CD4-positive, alpha-beta T cell (primary cell): ENCODE measurements at regions of chr19 and their contacts with region 1.

Region 1: GRCh38 chr19:58558623-58559274 is 338 bp upstream of the UBE2M start:
- DNase-seq: peak; percentile 99 to 100 (median 100)
- ATAC-seq: peak; percentile 70
- H3K4me3 ChIP-seq: peak overlapping the region; percentile 76
- H3K4me3 Mint-ChIP-seq: peak overlapping the region; percentile 98
- H3K27ac ChIP-seq: peak overlapping the region; percentile 88 to 96
- H3K27ac Mint-ChIP-seq: peak overlapping the region; percentile 96
- H3K4me1 ChIP-seq: peaks cover 90% of the 10 kb centered on the region
- H3K4me1 Mint-ChIP-seq: peaks cover 82% of the 10 kb centered on the region
- H3K27me3 ChIP-seq: no peaks in the 10 kb centered on the region
- H3K27me3 Mint-ChIP-seq: no peaks in the 10 kb centered on the region
- CTCF ChIP-seq: no peak

Region 2: GRCh38 chr19:58543826-58544590 is 14.7 kb before region 1 on chr19 and contains the start of gene TRIM28:
- CTCF ChIA-PET with region 1: no interaction called
- POLR2A ChIA-PET with region 1: interaction called, 64 read pairs
- intact Hi-C with region 1: loop called (anchors 1 kb)
- DNase-seq: peak; percentile 99 to 100 (median 100)
- ATAC-seq: peak; percentile 87
- H3K4me3 ChIP-seq: peak within 1 kb of the TSS; percentile 70
- H3K4me3 Mint-ChIP-seq: peak within 1 kb of the TSS; percentile 95
- H3K27ac ChIP-seq: peak within 1 kb of the TSS; percentile 79 to 88
- H3K27ac Mint-ChIP-seq: peak within 1 kb of the TSS; percentile 95
- H3K4me1 ChIP-seq: peaks cover 41% of the 10 kb centered on the region
- H3K4me1 Mint-ChIP-seq: peaks cover 40% of the 10 kb centered on the region
- H3K27me3 ChIP-seq: no peaks in the 10 kb centered on the region
- H3K27me3 Mint-ChIP-seq: no peaks in the 10 kb centered on the region
- CTCF ChIP-seq: no peak
- total RNA-seq, gene TRIM28: 549 to 553 TPM

Region 3: GRCh38 chr19:58572818-58573657 is 14.3 kb after region 1 on chr19 and contains the start of gene MZF1:
- CTCF ChIA-PET with region 1: no interaction called
- POLR2A ChIA-PET with region 1: interaction called, 63 read pairs
- intact Hi-C with region 1: loop called (anchors 1 kb)
- DNase-seq: peak; percentile 98 to 100 (median 100)
- ATAC-seq: peak; percentile 72
- H3K4me3 ChIP-seq: peak within 1 kb of the TSS; percentile 84
- H3K4me3 Mint-ChIP-seq: peak within 1 kb of the TSS; percentile 92
- H3K27ac ChIP-seq: peak within 1 kb of the TSS; percentile 100
- H3K27ac Mint-ChIP-seq: peak within 1 kb of the TSS; percentile 96
- H3K4me1 ChIP-seq: peaks cover 49% of the 10 kb centered on the region
- H3K4me1 Mint-ChIP-seq: peaks cover 36% of the 10 kb centered on the region
- H3K27me3 ChIP-seq: no peaks in the 10 kb centered on the region
- H3K27me3 Mint-ChIP-seq: no peaks in the 10 kb centered on the region
- CTCF ChIP-seq: no peak
- total RNA-seq, gene MZF1: 21.0 to 21.1 TPM